Mammary epithelial cell (primary cell): ENCODE measurements at regions of chr1 and their contacts with region 1.

Region 1: DNA sequence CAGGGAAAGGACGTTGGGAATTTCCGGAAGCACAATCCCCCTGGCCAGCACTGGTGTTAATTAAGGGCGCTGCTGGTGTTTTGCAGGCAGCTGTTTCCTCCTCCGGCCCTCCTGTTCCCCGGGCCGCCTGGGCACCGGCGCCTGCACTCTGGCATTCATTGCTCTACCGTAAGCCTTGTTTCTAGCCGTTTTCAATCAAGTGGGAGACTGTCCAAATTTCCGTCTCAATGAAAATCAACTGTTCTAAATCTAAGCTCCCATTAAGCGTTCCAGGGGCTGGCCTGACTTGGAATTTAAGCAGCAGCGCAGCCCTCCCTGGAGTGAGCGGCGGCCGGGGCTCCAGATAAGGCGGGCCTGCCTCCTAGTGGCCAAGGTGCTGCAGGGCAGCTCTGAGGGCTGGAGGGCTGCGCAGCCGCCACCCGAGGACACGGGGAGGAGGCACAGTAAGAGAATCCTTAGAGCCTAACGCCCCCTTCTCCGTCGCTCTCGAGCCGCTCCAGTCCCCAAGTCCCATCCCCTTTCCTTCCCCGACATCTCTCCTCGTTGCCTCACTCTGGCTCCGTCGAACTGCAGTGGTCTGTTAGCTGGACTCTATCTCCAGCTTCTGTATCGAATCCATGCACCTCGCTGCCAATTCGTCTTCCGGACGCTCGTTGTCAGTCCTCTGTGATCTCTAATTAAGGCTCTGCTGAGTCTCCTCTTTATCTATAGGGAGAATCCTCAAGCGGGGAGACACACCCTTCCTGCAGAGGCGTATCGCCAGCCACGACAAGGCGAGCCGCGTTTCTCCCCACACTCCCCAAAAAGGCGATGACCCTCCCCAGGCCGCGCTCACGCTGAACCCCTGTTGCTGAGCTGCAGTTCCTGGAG is 57.8 kb upstream of the LRRC8D start:
- DNase-seq: peak; percentile 68
- H3K4me3 ChIP-seq: peak overlapping the region; percentile 41 to 53 (median 52)
- H3K27ac ChIP-seq: no peak overlapping the region
- H3K4me1 ChIP-seq: peaks cover 22% of the 10 kb centered on the region
- H3K27me3 ChIP-seq: no peaks in the 10 kb centered on the region
- CTCF ChIP-seq: peak; percentile 85 to 99

Region 2: GRCh38 chr1:89022167-89022959 is 740.7 kb before region 1 on chr1 and contains the start of gene GBP3:
- CTCF ChIA-PET with region 1: no interaction called
- dilution Hi-C with region 1: no loop called
- in situ Hi-C with region 1: loop called in 1 of 2 experiments (anchors 25 kb)
- intact Hi-C with region 1: no loop called
- DNase-seq: peak; percentile 74
- H3K4me3 ChIP-seq: peak within 1 kb of the TSS; percentile 58 to 79 (median 75)
- H3K27ac ChIP-seq: peak within 1 kb of the TSS; percentile 77
- H3K4me1 ChIP-seq: peaks cover 7% of the 10 kb centered on the region
- H3K27me3 ChIP-seq: no peaks in the 10 kb centered on the region
- CTCF ChIP-seq: no peak
- total RNA-seq, gene GBP3: 20.2 to 27.2 TPM

Region 3: DNA sequence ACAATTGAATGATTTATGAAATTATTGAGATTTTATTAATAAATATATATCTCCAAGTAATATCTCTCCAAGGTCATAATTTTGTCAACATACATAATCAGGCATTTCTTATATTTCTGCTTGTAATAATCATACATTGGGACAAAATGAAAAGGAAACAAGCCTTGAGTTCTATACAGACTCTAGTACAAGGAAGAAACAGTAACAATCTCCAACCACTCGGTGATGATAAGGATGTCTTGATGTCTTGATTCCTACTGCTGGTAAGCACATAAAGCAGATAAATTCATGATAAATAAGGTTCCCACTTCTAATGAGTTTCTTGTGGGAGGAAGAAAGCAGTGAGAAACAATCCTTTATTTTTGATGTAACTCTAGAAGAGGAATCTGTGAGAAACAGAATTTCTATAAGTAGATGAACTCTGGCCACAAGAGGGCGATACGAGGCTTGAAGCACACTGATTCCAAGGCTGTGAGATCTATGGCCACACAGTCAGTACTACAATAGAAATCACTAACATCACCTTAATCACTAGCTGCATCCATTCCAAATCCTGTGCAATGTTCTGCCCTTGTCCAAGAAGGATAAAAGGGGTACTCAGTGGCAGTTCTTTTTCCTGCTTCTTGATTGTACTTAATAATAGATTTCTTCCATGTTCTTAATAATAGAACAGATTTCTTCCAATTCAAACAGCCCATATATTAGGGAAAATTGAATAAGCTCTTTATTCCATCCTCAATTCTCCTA is 279.8 kb before region 1 on chr1:
- CTCF ChIA-PET with region 1: no interaction called
- dilution Hi-C with region 1: no loop called
- in situ Hi-C with region 1: loop called (anchors 25 kb)
- intact Hi-C with region 1: loop called (anchors 1 kb)
- DNase-seq: peak; percentile 62
- H3K4me3 ChIP-seq: no peak overlapping the region
- H3K27ac ChIP-seq: no peak overlapping the region
- H3K4me1 ChIP-seq: no peaks in the 10 kb centered on the region
- H3K27me3 ChIP-seq: no peaks in the 10 kb centered on the region
- CTCF ChIP-seq: peak; percentile 65 to 83

Region 4: DNA sequence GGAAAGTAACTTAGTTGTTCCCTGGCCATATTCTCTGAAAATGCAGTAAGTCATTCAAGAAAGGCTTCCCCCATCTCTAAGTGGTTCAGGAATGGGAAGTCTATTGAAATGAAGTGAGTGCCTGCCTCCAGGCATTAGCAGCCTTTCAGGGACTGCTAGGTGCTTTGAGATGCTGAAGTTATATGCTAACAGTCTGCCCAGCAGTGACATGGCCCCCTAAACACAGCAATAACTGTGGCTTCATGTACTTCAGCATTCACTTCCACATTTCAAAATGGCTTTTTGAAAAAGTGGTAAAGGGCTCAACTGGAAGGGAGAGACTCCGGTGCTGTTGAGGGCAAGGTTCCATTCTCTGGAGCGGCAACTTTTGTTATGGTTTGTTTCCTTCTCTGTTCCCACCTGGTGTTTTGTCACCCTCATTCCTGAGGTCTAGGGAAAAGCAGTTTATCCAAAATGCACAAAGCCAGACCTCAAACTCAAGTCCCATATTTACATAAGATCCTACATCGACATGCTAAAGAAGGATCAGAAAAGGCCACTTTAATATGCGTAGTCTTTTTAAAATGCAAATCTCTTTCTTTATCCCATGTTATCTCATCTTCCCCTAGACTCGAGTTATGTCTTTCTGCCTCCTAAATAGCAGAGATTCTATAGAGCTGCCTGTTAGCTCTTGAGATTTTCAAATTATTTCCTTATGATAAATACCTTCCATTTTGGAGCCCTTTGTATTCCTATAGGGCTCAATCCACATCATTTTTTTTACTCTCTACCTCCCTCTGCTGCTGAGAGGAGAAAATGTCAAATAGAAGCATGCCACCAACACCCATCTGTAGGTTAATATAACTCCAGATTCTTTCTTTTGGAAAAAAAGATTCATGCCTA is 164.3 kb before region 1 on chr1:
- CTCF ChIA-PET with region 1: no interaction called
- dilution Hi-C with region 1: no loop called
- in situ Hi-C with region 1: no loop called
- intact Hi-C with region 1: loop called (anchors 1 kb)
- DNase-seq: peak; percentile 29
- H3K4me3 ChIP-seq: no peak overlapping the region
- H3K27ac ChIP-seq: no peak overlapping the region
- H3K4me1 ChIP-seq: peaks cover 4% of the 10 kb centered on the region
- H3K27me3 ChIP-seq: no peaks in the 10 kb centered on the region
- CTCF ChIP-seq: peak; percentile 61 to 66

Region 5: DNA sequence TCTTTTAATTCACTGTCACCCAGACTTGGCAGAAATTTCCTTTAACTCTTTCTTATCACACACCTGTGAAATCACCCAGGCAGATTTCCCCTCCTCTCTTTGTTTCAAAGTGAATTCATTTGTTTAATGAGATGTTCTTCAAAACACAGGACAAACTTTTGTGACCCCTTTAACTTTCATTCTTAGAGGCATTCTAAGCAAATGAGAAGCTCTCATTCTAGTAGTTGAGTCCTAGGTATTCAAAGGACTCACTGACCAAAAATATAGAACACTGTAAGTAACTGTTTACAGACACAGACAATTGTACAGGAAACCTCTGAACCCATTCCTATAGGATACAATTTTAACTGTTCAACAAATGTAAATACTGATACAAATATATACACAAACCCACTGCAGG is 113.2 kb before region 1 on chr1:
- CTCF ChIA-PET with region 1: no interaction called
- dilution Hi-C with region 1: no loop called
- in situ Hi-C with region 1: no loop called
- intact Hi-C with region 1: no loop called
- DNase-seq: no peak
- H3K4me3 ChIP-seq: no peak overlapping the region
- H3K27ac ChIP-seq: no peak overlapping the region
- H3K4me1 ChIP-seq: no peaks in the 10 kb centered on the region
- H3K27me3 ChIP-seq: no peaks in the 10 kb centered on the region
- CTCF ChIP-seq: no peak

Region 6: DNA sequence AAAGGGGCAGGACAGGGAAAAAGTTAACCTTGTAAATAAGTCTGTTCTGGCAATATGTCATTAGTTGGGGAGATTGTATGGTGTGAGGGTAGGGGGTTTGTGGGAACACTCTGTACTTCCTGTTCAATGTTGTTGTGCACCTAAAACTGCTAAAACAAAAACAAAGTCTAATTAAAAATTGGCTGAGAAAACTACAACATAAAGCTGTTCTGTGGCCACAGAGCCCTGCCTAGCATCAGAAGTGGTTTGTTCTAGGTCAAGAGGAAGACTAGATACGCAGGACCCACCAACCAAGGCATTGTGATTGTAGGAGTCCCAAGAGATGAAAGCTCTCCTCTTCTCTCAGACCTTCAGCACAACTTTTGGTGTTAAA is 23.2 kb before region 1 on chr1:
- CTCF ChIA-PET with region 1: interaction called, 17 read pairs
- dilution Hi-C with region 1: no loop called
- in situ Hi-C with region 1: no loop called
- intact Hi-C with region 1: no loop called
- DNase-seq: no peak
- H3K4me3 ChIP-seq: no peak overlapping the region
- H3K27ac ChIP-seq: peak overlapping the region; percentile 4
- H3K4me1 ChIP-seq: peaks cover 13% of the 10 kb centered on the region
- H3K27me3 ChIP-seq: no peaks in the 10 kb centered on the region
- CTCF ChIP-seq: no peak